T-cell (primary cell): ENCODE measurements at regions of chr12 and their contacts with region 1.

Region 1: GRCh38 chr12:86117711-86118110 is 138.5 kb downstream of the MGAT4C start:
- DNase-seq: no peak
- ATAC-seq: no peak
- H3K4me3 ChIP-seq: no peak overlapping the region
- H3K4me3 Mint-ChIP-seq: no peak overlapping the region
- H3K27ac ChIP-seq: no peak overlapping the region
- H3K27ac Mint-ChIP-seq: no peak overlapping the region
- H3K4me1 ChIP-seq: no peaks in the 10 kb centered on the region
- H3K4me1 Mint-ChIP-seq: no peaks in the 10 kb centered on the region
- H3K27me3 ChIP-seq: no peaks in the 10 kb centered on the region
- H3K27me3 Mint-ChIP-seq: no peaks in the 10 kb centered on the region

Region 2: GRCh38 chr12:86134561-86134960 is 16.9 kb after region 1 on chr12:
- CTCF ChIA-PET with region 1: no interaction called
- POLR2A ChIA-PET with region 1: interaction called in 1 of 2 experiments, 16 read pairs
- DNase-seq: no peak
- ATAC-seq: no peak
- H3K4me3 ChIP-seq: no peak overlapping the region
- H3K4me3 Mint-ChIP-seq: no peak overlapping the region
- H3K27ac ChIP-seq: no peak overlapping the region
- H3K27ac Mint-ChIP-seq: no peak overlapping the region
- H3K4me1 ChIP-seq: no peaks in the 10 kb centered on the region
- H3K4me1 Mint-ChIP-seq: no peaks in the 10 kb centered on the region
- H3K27me3 ChIP-seq: no peaks in the 10 kb centered on the region
- H3K27me3 Mint-ChIP-seq: no peaks in the 10 kb centered on the region